Heart right ventricle (tissue), 16 donors: ENCODE measurements at regions of chr5 and their contacts with region 1.

Region 1: GRCh38 chr5:88729084-88729828 is 153.7 kb downstream of the MEF2C start:
- DNase-seq: peak in 1 of 2 donors; percentile 77
- ATAC-seq: peak; percentile 75 to 84 (median 80)
- H3K4me3 ChIP-seq: no peak overlapping the region
- H3K27ac ChIP-seq: peak overlapping the region in 1 of 10 donors; percentile 1
- H3K4me1 ChIP-seq: peaks cover 0 to 59% (median 23%) of the 10 kb centered on the region in 9 donors
- H3K27me3 ChIP-seq: no peaks in the 10 kb centered on the region
- CTCF ChIP-seq: peak; percentile 72 to 90 (median 87)

Region 2: DNA sequence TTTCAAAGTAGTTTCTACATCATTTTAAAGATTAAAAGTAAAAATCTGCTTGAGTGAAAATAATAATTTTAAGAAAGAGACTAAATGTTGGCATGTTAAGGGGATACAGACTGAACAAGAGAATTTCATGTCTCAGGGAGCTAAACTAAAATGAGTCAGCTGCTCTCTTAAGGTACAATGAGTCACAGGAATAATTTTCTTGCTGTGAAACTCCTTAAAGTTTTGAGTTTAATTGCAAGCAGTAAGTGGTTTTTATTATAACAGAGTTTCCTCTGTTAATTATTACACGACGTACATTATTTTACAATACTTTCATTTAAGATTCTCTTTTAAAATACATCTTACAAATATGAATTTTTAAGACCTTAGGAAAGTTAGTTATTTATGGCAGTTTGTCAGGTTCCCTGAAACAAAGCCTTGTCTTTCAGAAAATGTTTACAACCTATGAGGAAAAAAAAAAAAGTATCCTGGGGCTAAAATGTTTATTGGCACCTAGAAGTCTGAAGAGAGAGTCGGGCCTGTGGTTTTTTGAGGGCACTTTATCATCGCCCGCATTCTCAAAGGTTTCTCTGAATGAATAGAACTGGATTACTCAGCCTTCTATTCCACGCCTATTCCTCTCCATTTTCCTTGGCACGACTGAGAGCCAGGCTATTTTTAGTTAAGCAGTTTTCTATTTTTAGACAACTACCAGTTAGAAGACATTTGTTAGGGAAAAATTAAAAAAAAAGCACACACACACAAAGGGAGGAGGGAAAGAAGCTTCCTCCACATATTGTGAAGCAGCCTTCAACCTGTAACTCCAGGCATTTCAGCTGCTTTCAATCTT is 56.3 kb after region 1 on chr5:
- intact Hi-C with region 1: loop called in 1 of 10 experiments (anchors 5 kb)
- DNase-seq: peak in 1 of 2 donors; percentile 80
- ATAC-seq: peak; percentile 90 to 96 (median 94)
- H3K4me3 ChIP-seq: peak overlapping the region in 6 of 10 donors; percentile 3 to 26 (median 16)
- H3K27ac ChIP-seq: peak overlapping the region; percentile 14 to 91 (median 80)
- H3K4me1 ChIP-seq: peaks cover 0 to 78% (median 48%) of the 10 kb centered on the region in 9 donors
- H3K27me3 ChIP-seq: no peaks in the 10 kb centered on the region
- CTCF ChIP-seq: no peak

Region 3: DNA sequence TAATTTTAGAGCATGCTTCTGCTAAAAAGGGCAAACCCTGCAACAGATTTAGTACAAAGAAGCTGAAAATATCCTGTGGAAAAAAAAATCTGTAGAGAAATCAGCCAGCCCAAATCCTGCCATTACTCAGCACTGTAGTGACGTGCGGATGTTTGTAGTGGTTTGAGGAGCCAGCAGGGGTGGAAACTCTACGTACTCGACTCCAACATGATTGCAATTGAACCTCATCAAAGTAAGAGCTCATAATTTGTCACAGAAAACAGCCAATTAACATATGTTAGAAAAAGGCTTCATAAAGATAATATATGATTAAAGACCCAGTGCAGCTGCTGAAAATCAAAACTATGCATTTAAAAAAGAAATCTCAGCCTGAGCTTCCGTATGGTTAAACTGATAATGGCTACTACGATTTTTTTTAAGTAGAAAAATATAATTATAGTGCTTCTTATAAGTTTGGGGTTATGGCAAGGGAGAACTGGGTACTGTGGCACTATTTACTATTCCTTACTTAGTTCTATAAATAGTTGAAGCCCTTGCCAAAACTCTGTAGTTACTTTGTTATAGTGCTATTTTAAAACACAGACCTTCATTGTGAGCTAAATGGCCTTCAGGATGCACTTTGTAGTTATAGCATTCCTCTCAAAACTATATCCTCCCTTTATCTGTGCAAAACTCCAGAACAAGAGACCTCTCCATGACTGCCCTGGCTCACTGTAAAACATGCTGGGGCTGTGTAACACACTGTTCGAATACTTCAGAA is 104.3 kb after region 1 on chr5:
- intact Hi-C with region 1: loop called in 4 of 10 experiments (anchors 5 to 10 kb)
- DNase-seq: peak in 1 of 2 donors; percentile 81
- ATAC-seq: peak; percentile 71 to 89 (median 83)
- H3K4me3 ChIP-seq: peak overlapping the region in 8 of 10 donors; percentile 10 to 41 (median 32)
- H3K27ac ChIP-seq: peak overlapping the region; percentile 37 to 92 (median 77)
- H3K4me1 ChIP-seq: peaks cover 4 to 100% (median 87%) of the 10 kb centered on the region in 9 donors
- H3K27me3 ChIP-seq: no peaks in the 10 kb centered on the region
- CTCF ChIP-seq: peak in 2 of 9 donors; percentile 25 to 30

Region 4: GRCh38 chr5:88889189-88890069 is 160.2 kb after region 1 on chr5:
- intact Hi-C with region 1: loop called in 7 of 10 experiments (anchors 2 to 5 kb)
- DNase-seq: peak; percentile 71 to 79
- ATAC-seq: peak; percentile 84 to 97 (median 90)
- H3K4me3 ChIP-seq: peak overlapping the region; percentile 53 to 73 (median 64)
- H3K27ac ChIP-seq: peak overlapping the region; percentile 65 to 95 (median 90)
- H3K4me1 ChIP-seq: peaks cover 4 to 65% (median 44%) of the 10 kb centered on the region in 9 donors
- H3K27me3 ChIP-seq: peaks cover 0 to 9% (median 0%) of the 10 kb centered on the region in 7 donors
- CTCF ChIP-seq: peak in 2 of 9 donors; percentile 7 to 9

Region 5: DNA sequence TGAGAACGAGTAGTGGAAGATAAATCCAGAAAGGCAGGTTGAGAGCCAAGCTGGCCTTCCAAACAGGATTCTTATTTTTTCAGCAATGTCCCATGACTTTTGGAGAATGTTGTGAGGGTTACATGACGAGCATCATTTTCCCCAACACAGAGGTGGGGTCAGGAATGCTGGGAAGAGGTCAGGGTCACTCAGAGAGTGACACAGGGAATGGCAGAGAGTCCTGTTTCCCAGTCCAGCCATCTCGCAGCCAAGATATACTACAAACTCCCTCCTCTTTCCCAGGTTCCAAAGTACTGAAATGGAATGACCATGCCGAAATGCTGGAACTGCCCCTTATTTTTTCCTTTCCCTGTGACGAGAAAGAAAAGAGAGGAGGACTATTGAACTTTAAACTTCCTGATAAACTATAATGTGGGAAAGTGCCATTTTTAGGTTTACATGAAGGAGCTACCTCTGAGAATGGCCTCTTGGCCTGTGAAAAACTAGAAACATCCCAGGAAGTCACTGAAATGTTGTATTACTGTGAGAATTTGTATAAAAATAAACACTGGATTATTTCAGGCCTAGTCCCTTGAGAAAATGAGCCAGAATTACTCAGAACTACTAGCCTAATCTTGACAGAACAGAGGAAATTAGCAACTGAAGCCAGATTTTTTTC is 1259.9 kb after region 1 on chr5:
- intact Hi-C with region 1: loop called in 1 of 10 experiments (anchors 10 kb)
- DNase-seq: peak; percentile 14 to 79
- ATAC-seq: peak; percentile 80 to 92 (median 88)
- H3K4me3 ChIP-seq: no peak overlapping the region
- H3K27ac ChIP-seq: peak overlapping the region; percentile 10 to 88 (median 72)
- H3K4me1 ChIP-seq: peaks cover 3 to 40% (median 19%) of the 10 kb centered on the region in 9 donors
- H3K27me3 ChIP-seq: no peaks in the 10 kb centered on the region
- CTCF ChIP-seq: no peak

Region 6: DNA sequence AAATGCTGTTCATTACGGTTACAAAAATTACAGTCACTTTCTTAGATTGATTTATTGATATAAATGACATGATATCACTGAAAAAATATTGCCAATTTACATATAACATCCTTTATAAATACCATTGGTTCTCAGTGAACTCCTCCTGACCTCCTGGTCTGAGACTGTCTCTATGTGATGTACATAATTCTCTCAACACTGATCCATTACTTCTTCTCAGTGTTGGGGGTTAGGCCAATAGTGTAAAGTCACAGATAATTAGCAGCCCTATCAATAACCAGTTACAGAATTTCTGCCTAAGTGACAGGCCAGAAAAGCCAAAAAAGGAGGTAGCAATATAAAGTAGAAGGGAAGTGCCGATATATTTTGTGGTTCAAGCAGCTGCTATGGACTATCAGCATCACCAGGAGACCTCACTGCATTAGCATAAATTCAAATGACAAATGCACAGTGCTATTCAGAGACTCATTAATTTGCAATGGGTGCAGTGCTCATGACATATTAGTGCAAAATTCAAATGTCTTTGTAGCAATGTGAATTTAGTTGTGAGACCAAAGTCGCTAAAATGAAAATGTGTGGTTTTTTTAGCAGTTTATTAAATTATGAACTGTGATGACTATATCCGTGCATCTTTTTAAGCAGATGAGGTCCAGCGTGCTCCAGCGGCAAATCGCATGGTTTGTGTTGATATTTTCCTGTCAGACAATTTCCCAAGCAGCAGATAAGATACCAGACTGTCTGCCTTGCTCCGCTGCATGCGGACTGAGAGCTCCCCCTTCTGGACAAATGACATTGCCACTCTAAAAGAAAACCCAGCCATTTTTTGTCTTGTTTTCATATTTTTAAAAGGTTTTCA is 1535.7 kb after region 1 on chr5:
- intact Hi-C with region 1: loop called in 9 of 10 experiments (anchors 2 to 10 kb)
- DNase-seq: peak; percentile 40 to 77
- ATAC-seq: peak in 7 of 8 donors; percentile 47 to 92 (median 78)
- H3K4me3 ChIP-seq: no peak overlapping the region
- H3K27ac ChIP-seq: no peak overlapping the region
- H3K4me1 ChIP-seq: peaks cover 0 to 5% (median 4%) of the 10 kb centered on the region in 9 donors
- H3K27me3 ChIP-seq: no peaks in the 10 kb centered on the region
- CTCF ChIP-seq: peak; percentile 84 to 98 (median 93)

Region 7: GRCh38 chr5:90409318-90410177 is 1680.3 kb after region 1 on chr5 and contains the start of gene CETN3:
- intact Hi-C with region 1: loop called in 2 of 10 experiments (anchors 10 kb)
- DNase-seq: peak; percentile 90 to 94
- ATAC-seq: peak; percentile 98 to 99 (median 98)
- H3K4me3 ChIP-seq: peak within 1 kb of the TSS; percentile 63 to 97 (median 82)
- H3K27ac ChIP-seq: peak within 1 kb of the TSS; percentile 88 to 98 (median 96)
- H3K4me1 ChIP-seq: peaks cover 0 to 35% (median 11%) of the 10 kb centered on the region in 9 donors
- H3K27me3 ChIP-seq: no peaks in the 10 kb centered on the region
- CTCF ChIP-seq: peak in 2 of 9 donors; percentile 7 to 25
- total RNA-seq, gene CETN3: 17.2 to 26.6 (median 21.3) TPM